ENCODE measurements at regions of chr18 and their contacts with region 1.

Region 1: DNA sequence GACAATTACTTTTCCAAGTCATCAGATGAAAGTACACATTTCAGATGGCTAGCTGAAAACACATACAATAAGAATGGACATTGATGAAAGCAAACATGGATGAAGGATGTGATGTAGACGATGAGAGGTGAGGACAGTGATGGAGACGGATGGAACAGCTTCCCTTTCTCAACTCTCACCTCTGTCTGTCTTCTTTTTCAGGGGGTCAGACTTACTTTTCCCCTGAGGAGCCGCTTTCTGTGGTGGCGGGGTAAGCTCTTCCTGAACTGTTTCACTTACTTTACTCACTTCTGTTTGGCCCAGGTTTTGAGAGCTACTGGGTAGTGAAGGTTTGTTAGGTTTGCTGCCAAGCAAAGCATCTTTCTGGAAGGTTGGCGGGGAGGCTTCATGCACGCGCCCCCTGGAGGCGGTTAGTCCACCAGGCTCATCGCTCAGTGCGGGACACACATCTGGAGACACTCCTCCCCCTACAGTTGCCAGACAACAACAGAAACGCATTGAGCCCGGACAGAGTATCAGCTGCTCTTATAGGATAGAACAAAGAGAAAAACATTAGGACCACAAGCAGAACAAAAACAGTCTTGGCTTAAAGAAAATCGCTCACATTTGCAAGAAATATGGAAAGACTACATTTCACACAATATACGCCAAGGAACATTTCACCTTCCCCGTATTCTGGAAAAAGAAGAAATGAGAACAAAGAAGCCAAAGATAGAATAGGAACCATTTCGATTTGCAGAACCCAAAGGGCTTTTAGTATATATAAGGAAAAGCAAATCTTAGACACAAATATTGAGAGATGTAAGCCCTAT is 90.5 kb downstream of the MYOM1 start:
- DNase-seq: peak; percentile 92
- H3K4me3 Mint-ChIP-seq: no peak overlapping the region
- H3K27ac Mint-ChIP-seq: no peak overlapping the region
- H3K4me1 Mint-ChIP-seq: peaks cover 10% of the 10 kb centered on the region
- H3K27me3 Mint-ChIP-seq: no peaks in the 10 kb centered on the region

Region 2: DNA sequence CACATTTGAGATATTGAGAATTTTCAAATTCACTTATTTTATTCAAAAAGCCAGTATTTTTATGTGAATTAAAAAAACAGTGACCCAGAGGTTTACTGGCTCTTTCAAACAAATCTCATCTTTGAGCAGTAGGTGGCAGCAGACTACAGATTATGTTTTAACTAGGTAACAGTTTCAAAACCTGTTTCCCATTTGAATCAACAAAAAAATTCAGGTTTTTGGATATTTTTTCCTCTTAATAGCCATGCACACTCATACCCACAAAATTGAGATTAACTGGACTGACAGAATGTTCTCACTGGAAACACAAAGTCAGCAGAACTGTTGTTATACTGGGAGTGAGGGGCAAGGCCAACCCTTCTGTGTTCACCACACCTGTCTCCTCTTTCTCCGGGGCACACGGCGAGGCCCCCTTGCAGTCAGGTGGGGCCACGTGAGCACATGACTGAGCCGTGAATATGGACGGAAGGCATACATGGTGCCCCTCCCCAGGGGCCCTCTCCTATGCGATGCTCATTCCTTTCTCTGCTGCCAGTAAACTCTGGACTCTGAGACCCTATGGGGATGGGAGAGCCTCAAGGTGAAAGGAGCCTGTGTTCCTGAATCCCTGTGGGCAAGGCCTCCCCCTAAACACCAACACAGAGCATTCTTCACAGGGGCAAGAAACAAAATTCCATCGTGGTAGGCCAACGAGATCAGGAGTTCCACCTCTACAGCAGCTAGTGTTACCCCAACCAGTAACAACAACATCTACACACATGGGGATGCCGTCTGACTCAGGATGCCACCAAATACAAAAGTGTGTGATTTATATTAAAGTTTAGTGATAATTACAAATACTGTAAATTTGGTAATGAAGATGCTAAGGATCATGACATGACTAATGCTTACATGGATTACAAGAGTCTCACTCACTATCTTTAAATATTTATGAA is 196.7 kb before region 1 on chr18:
- CTCF ChIA-PET with region 1: interaction called, 46 read pairs
- intact Hi-C with region 1: loop called (anchors 1 kb)
- DNase-seq: peak; percentile 68
- H3K4me3 Mint-ChIP-seq: no peak overlapping the region
- H3K27ac Mint-ChIP-seq: peak overlapping the region; percentile 94
- H3K4me1 Mint-ChIP-seq: peaks cover 35% of the 10 kb centered on the region
- H3K27me3 Mint-ChIP-seq: no peaks in the 10 kb centered on the region

Region 3: GRCh38 chr18:3012964-3013804 is 116.1 kb before region 1 on chr18 and contains the start of gene LPIN2:
- CTCF ChIA-PET with region 1: interaction called, 7 read pairs
- intact Hi-C with region 1: loop called (anchors 1 kb)
- DNase-seq: peak; percentile 97
- H3K4me3 Mint-ChIP-seq: peak within 1 kb of the TSS; percentile 84
- H3K27ac Mint-ChIP-seq: peak within 1 kb of the TSS; percentile 92
- H3K4me1 Mint-ChIP-seq: peaks cover 68% of the 10 kb centered on the region
- H3K27me3 Mint-ChIP-seq: no peaks in the 10 kb centered on the region
- total RNA-seq, gene LPIN2: 62.4 to 65.7 TPM

Region 4: GRCh38 chr18:3151399-3152264 is 22.4 kb after region 1 on chr18:
- CTCF ChIA-PET with region 1: interaction called, 16 read pairs
- intact Hi-C with region 1: no loop called
- DNase-seq: no peak
- H3K4me3 Mint-ChIP-seq: no peak overlapping the region
- H3K27ac Mint-ChIP-seq: no peak overlapping the region
- H3K4me1 Mint-ChIP-seq: peaks cover 6% of the 10 kb centered on the region
- H3K27me3 Mint-ChIP-seq: no peaks in the 10 kb centered on the region

Measured in activated naive CD4-positive, alpha-beta T cell treated with anti-CD3 and anti-CD28 coated beads for 36 hours (primary cell).